ENCODE measurements at regions of chr6 and their contacts with region 1.

Region 1: GRCh38 chr6:47897247-47897646 is 115.4 kb downstream of the OPN5 start:
- DNase-seq: no peak
- H3K4me3 ChIP-seq: no peak overlapping the region
- H3K27ac ChIP-seq: no peak overlapping the region
- H3K4me1 ChIP-seq: no peaks in the 10 kb centered on the region
- H3K27me3 ChIP-seq: no peaks in the 10 kb centered on the region
- CTCF ChIP-seq: no peak
- EP300 ChIP-seq: no peak
- POLR2A ChIP-seq: no peak

Region 2: GRCh38 chr6:47908271-47908670 is 11.0 kb after region 1 on chr6:
- in situ Hi-C with region 1: no loop called
- intact Hi-C with region 1: loop called (anchors 1 kb)
- DNase-seq: no peak
- H3K4me3 ChIP-seq: no peak overlapping the region
- H3K27ac ChIP-seq: no peak overlapping the region
- H3K4me1 ChIP-seq: no peaks in the 10 kb centered on the region
- H3K27me3 ChIP-seq: no peaks in the 10 kb centered on the region
- CTCF ChIP-seq: no peak
- EP300 ChIP-seq: no peak
- POLR2A ChIP-seq: no peak